Ascending aorta (tissue), 2 donors: ENCODE measurements at regions of chr14 and their contacts with region 1.

Region 1: GRCh38 chr14:32252030-32252670 is 49.1 kb upstream of the RNU6-8 start:
- DNase-seq: peak in 1 of 2 donors; percentile 77
- H3K4me3 ChIP-seq: no peak overlapping the region
- H3K27ac ChIP-seq: no peak overlapping the region
- H3K4me1 ChIP-seq: peaks cover 0 to 7% of the 10 kb centered on the region in 2 donors
- H3K27me3 ChIP-seq: no peaks in the 10 kb centered on the region
- CTCF ChIP-seq: peak; percentile 59 to 92 (median 70)

Region 2: GRCh38 chr14:31561155-31561846 is 690.8 kb before region 1 on chr14 and contains the start of gene NUBPL:
- intact Hi-C with region 1: loop called (anchors 10 kb)
- DNase-seq: peak; percentile 79 to 97
- H3K4me3 ChIP-seq: peak within 1 kb of the TSS; percentile 88 to 98
- H3K27ac ChIP-seq: peak within 1 kb of the TSS; percentile 79 to 82
- H3K4me1 ChIP-seq: peaks cover 0 to 4% of the 10 kb centered on the region in 2 donors
- H3K27me3 ChIP-seq: no peaks in the 10 kb centered on the region
- CTCF ChIP-seq: no peak
- total RNA-seq, gene NUBPL: 1.7 TPM

Region 3: GRCh38 chr14:32202998-32203882 is 48.9 kb before region 1 on chr14 and contains the start of gene RNU6-8:
- intact Hi-C with region 1: loop called (anchors 2 kb)
- DNase-seq: peak; percentile 40 to 91
- H3K4me3 ChIP-seq: peak within 1 kb of the TSS; percentile 72 to 75
- H3K27ac ChIP-seq: peak within 1 kb of the TSS; percentile 69 to 75
- H3K4me1 ChIP-seq: no peaks in the 10 kb centered on the region
- H3K27me3 ChIP-seq: no peaks in the 10 kb centered on the region
- CTCF ChIP-seq: no peak
- total RNA-seq, gene RNU6-8: not detected

Region 4: GRCh38 chr14:32417956-32418552 is 165.9 kb after region 1 on chr14:
- intact Hi-C with region 1: no loop called
- DNase-seq: peak in 1 of 2 donors; percentile 72
- H3K4me3 ChIP-seq: no peak overlapping the region
- H3K27ac ChIP-seq: peak overlapping the region in 1 of 2 donors; percentile 13
- H3K4me1 ChIP-seq: peaks cover 0 to 12% of the 10 kb centered on the region in 2 donors
- H3K27me3 ChIP-seq: no peaks in the 10 kb centered on the region
- CTCF ChIP-seq: no peak

Region 5: DNA sequence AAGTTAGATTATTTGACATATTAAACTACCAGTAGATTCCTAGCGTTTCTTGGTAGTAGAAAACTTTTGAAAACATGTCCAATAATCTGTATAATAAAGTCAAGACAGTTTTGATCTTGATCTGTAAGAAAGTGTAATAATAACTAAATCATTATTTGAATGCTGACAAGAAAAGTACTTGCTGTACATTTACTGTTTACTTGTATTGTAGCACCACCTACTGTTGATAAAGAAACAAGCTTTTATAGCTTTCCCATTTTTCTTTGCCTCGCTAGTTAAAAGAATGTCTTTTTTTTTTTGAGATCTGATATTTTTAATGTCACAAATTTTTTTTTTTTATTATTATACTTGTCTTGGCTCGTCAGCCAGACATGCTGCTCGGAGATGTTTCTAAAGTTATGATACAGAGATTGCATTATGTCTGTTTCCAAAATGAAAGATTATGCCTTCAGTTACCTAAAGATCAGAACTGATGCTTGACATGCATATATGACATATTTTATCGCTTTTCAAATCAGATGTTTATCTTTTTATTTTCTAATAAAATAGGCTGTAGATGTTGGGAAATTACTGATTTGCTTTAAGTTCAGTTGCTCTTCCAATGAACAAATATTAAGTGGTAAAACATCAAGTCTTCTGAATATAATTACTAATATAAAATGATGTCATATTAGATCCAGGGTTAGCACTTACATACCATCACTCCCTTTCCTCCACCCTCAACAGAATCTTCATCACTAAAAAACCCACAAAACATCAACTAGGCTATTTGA is 217.4 kb after region 1 on chr14:
- intact Hi-C with region 1: loop called (anchors 1 kb)
- DNase-seq: no peak
- H3K4me3 ChIP-seq: no peak overlapping the region
- H3K27ac ChIP-seq: peak overlapping the region; percentile 65 to 83
- H3K4me1 ChIP-seq: peaks cover 5 to 35% of the 10 kb centered on the region in 2 donors
- H3K27me3 ChIP-seq: no peaks in the 10 kb centered on the region
- CTCF ChIP-seq: peak; percentile 23 to 59 (median 51)

Region 6: GRCh38 chr14:32560209-32560857 is 308.2 kb after region 1 on chr14:
- intact Hi-C with region 1: loop called (anchors 5 kb)
- DNase-seq: peak in 1 of 2 donors; percentile 72
- H3K4me3 ChIP-seq: no peak overlapping the region
- H3K27ac ChIP-seq: no peak overlapping the region
- H3K4me1 ChIP-seq: peaks cover 8 to 23% of the 10 kb centered on the region in 2 donors
- H3K27me3 ChIP-seq: no peaks in the 10 kb centered on the region
- CTCF ChIP-seq: peak; percentile 51 to 88 (median 81)